ENCODE measurements at regions of chr9 and their contacts with region 1.

Region 1: GRCh38 chr9:35696525-35697215 is 6.9 kb upstream of the TPM2 start:
- DNase-seq: peak; percentile 60
- H3K4me3 Mint-ChIP-seq: no peak overlapping the region
- H3K27ac Mint-ChIP-seq: no peak overlapping the region
- H3K4me1 Mint-ChIP-seq: peaks cover 4% of the 10 kb centered on the region
- H3K27me3 Mint-ChIP-seq: no peaks in the 10 kb centered on the region

Region 2: DNA sequence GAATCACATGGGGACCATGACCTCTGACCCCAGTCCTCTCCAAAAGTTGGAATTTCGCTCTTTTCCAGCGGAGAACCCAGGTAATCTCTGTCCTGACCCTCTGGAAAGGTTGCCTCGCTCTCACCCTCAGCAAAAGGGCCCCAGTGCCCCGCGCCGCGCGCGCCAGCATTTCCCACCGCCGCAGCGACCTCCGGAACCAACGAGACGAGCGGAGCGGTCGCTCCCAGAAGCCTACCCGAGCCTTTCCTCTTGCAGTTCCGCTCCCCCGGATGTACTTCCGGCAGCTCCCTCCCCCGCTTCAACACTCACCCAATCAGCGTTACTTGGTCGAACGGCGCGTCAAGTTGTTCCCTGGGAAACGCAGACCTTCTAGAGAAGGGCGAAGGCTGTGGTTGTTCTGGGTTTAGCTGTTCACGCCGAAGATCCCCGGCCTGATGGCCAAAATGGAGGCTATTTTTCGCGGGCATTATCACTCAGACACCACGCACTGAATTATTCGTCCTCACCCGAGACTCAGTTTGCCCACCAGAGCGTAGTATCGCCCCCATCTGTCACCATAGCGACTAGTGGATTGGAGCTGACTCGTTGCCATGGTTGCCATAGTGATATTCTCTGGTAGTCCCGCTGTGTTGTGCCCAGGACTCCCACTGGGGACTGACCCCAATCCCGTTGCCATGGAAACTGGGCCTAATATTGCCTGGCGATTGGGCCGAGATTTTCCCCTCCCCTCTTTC is 593.6 kb before region 1 on chr9 and contains the start of gene STOML2:
- CTCF ChIA-PET with region 1: no interaction called
- POLR2A ChIA-PET with region 1: no interaction called
- DNase-seq: peak; percentile 95
- H3K4me3 Mint-ChIP-seq: peak within 1 kb of the TSS; percentile 80
- H3K27ac Mint-ChIP-seq: peak within 1 kb of the TSS; percentile 88
- H3K4me1 Mint-ChIP-seq: peaks cover 39% of the 10 kb centered on the region
- H3K27me3 Mint-ChIP-seq: no peaks in the 10 kb centered on the region
- total RNA-seq, gene STOML2: 96.0 to 96.9 TPM

Region 3: GRCh38 chr9:35538361-35539234 is 158.1 kb before region 1 on chr9:
- CTCF ChIA-PET with region 1: no interaction called
- POLR2A ChIA-PET with region 1: no interaction called
- DNase-seq: no peak
- H3K4me3 Mint-ChIP-seq: no peak overlapping the region
- H3K27ac Mint-ChIP-seq: no peak overlapping the region
- H3K4me1 Mint-ChIP-seq: no peaks in the 10 kb centered on the region
- H3K27me3 Mint-ChIP-seq: peaks cover 17% of the 10 kb centered on the region

Region 4: GRCh38 chr9:35611230-35611797 is 85.4 kb before region 1 on chr9:
- CTCF ChIA-PET with region 1: interaction called, 37 read pairs
- POLR2A ChIA-PET with region 1: interaction called, 6 read pairs
- DNase-seq: peak; percentile 61
- H3K4me3 Mint-ChIP-seq: no peak overlapping the region
- H3K27ac Mint-ChIP-seq: no peak overlapping the region
- H3K4me1 Mint-ChIP-seq: peaks cover 16% of the 10 kb centered on the region
- H3K27me3 Mint-ChIP-seq: peaks cover 3% of the 10 kb centered on the region

Region 5: DNA sequence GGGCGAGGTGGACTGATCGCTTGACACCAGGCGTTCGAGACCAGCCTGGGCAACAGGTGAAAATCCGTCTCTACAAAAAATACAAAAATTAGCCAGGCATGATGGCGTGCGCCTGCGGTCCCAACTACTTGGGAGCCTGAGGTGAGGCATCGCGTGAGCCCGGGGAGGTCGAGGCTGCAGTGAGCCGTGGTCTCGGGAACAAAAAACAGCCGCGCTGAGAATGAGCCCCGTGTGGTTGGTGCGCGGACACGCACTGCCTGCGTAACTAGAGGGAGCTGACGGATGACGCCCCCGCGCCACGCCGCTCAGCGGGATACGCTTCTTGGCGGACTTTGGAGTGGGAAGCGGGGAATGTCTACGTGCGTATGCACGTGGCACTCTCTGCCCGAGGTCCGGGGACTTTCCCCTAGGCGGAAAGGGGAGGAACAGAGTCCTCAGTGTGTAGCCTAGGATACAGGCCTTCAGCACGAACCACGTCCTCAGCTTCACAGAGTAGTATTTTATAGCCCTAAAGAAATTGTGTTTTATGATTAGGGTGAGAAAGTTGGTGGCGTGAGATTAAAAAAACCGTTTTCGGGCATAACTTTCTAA is 39.0 kb before region 1 on chr9 and contains the start of gene RMRP:
- CTCF ChIA-PET with region 1: interaction called, 60 read pairs
- POLR2A ChIA-PET with region 1: interaction called, 9 read pairs
- DNase-seq: peak; percentile 89
- H3K4me3 Mint-ChIP-seq: peak within 1 kb of the TSS; percentile 93
- H3K27ac Mint-ChIP-seq: peak within 1 kb of the TSS; percentile 94
- H3K4me1 Mint-ChIP-seq: peaks cover 62% of the 10 kb centered on the region
- H3K27me3 Mint-ChIP-seq: peaks cover 4% of the 10 kb centered on the region
- total RNA-seq, gene RMRP: 9,885 to 10,678 TPM

Region 6: DNA sequence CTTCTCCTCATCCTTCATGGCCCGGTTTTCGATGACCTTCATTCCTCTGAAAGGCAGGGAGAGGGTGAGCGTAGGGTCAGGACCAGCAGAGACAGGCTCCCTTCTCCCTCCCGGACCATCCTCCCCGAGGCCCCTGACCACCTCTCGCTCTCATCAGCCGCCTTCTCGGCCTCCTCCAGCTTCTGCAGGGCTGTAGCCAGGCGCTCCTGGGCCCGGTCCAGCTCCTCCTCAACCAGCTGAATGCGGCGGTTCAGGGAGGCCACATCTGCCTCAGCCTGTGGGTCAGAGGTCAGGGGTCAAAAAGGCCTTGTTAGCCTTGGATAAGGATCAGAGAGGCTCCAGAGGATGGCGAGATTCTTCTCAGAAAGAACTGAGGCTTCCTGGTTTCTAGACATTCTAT is 11.2 kb before region 1 on chr9:
- CTCF ChIA-PET with region 1: interaction called, 21 read pairs
- POLR2A ChIA-PET with region 1: interaction called, 4 read pairs
- DNase-seq: no peak
- H3K4me3 Mint-ChIP-seq: no peak overlapping the region
- H3K27ac Mint-ChIP-seq: no peak overlapping the region
- H3K4me1 Mint-ChIP-seq: peaks cover 12% of the 10 kb centered on the region
- H3K27me3 Mint-ChIP-seq: no peaks in the 10 kb centered on the region

Region 7: DNA sequence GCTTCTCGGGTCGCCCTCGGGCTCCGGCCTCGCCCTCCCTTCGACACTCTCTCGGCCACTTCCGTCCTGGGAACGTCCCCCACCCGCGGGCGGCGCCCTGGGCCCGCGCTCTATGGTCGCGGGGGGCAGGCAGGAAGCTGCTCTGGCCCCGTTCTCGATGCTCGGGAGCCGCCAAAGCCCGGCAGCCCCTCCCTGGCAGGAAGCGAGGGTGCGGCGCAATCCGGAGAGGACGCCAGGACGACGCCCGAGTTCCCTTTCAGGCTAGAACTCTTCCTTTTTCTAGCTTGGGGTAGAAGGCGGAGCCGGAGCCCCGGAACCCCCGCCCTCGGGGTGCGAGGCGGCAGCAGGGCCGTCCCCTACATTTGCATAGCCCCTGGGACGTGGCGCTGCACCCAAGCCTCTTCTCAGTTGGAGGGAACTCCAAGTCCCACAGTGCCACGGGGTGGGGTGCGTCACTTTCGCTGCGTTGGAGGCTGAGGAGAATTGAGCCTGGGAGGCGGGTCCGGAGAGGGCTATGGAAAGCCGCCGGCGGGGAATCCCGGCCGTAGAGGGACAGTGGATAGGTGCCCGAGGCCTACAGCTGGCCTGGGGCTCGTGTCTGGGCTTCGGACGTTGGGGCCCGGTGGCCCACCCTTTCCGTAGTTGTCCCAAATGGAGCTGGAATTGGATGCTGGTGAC is 35.6 kb after region 1 on chr9 and contains the starts of genes CREB3 and TLN1:
- CTCF ChIA-PET with region 1: interaction called, 31 read pairs
- POLR2A ChIA-PET with region 1: interaction called, 10 read pairs
- DNase-seq: peak; percentile 99
- H3K4me3 Mint-ChIP-seq: no peak within 1 kb of the TSS
- H3K27ac Mint-ChIP-seq: peak within 1 kb of the TSS; percentile 89
- H3K4me1 Mint-ChIP-seq: peaks cover 23% of the 10 kb centered on the region
- H3K27me3 Mint-ChIP-seq: no peaks in the 10 kb centered on the region
- total RNA-seq, gene CREB3: 23.2 to 24.1 TPM
- total RNA-seq, gene TLN1: 341 to 354 TPM

Measured in activated CD4-positive, alpha-beta memory T cell treated with anti-CD3 and anti-CD28 coated beads, Interleukin-2, amount 10 ng/mL, durations not matched to agents 7 days and 5 days (primary cell).